Naive thymus-derived CD4-positive, alpha-beta T cell (primary cell): ENCODE measurements at regions of chr7 and their contacts with region 1.

Region 1: DNA sequence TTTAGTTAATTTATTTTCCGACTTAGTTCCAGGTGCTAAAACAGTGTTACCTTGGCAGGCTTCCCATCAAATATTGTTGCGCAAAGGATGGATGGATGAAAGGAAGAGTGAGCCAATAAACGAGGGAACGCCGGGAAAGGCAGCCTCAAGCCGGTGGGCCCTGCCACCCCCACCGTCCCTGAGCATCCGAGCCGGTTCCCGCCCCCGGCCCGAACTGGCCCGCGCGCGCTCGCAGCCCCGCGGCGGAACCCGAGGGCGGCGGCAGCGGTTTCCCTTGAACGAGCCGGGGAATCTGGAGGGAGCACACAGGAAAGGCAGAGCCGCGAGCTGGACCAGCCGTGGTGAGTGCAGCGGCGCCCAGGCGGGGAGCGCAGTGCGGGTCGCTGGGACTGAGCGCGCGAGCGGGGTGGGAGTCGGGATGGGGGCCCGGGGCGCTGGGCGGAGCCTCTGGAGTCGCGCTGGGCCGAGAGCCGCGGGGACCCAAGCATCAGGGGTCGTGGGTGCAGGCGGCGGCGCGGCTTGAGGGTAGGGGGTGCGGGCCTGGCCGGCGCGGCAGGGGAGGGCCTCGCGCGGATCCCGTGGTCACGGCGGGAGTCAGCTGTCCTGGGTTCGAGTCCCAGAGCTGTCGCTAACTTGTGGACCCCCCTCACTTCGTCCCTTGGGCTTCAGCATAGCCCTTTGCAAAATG is at the start of gene AGK:
- DNase-seq: peak; percentile 61 to 83 (median 74)
- ATAC-seq: peak; percentile 96
- H3K4me3 ChIP-seq: peak within 1 kb of the TSS; percentile 89
- H3K4me3 Mint-ChIP-seq: peak within 1 kb of the TSS; percentile 83 to 99 (median 92)
- H3K27ac ChIP-seq: peak within 1 kb of the TSS; percentile 73
- H3K27ac Mint-ChIP-seq: peak within 1 kb of the TSS; percentile 52 to 96 (median 90)
- H3K4me1 ChIP-seq: peaks cover 12 to 17% of the 10 kb centered on the region in 2 donors
- H3K4me1 Mint-ChIP-seq: peaks cover 14 to 44% (median 40%) of the 10 kb centered on the region in 7 donors
- H3K27me3 ChIP-seq: no peaks in the 10 kb centered on the region
- H3K27me3 Mint-ChIP-seq: peaks cover 0 to 4% (median 0%) of the 10 kb centered on the region in 5 donors
- total RNA-seq, gene AGK: 24.3 to 58.8 (median 29.9) TPM

Region 2: GRCh38 chr7:140375892-140376730 is 1175.1 kb before region 1 on chr7:
- CTCF ChIA-PET with region 1: no interaction called
- POLR2A ChIA-PET with region 1: no interaction called
- intact Hi-C with region 1: loop called in 1 of 2 experiments (anchors 10 kb)
- DNase-seq: peak in 8 of 9 donors; percentile 34 to 71 (median 56)
- ATAC-seq: peak; percentile 89
- H3K4me3 ChIP-seq: peak overlapping the region; percentile 58
- H3K4me3 Mint-ChIP-seq: peak overlapping the region; percentile 67 to 92 (median 84)
- H3K27ac ChIP-seq: peak overlapping the region; percentile 75
- H3K27ac Mint-ChIP-seq: peak overlapping the region; percentile 87 to 97 (median 93)
- H3K4me1 ChIP-seq: peaks cover 6 to 10% of the 10 kb centered on the region in 2 donors
- H3K4me1 Mint-ChIP-seq: peaks cover 0 to 48% (median 20%) of the 10 kb centered on the region in 7 donors
- H3K27me3 ChIP-seq: no peaks in the 10 kb centered on the region
- H3K27me3 Mint-ChIP-seq: no peaks in the 10 kb centered on the region

Region 3: GRCh38 chr7:140696680-140697446 is 854.4 kb before region 1 on chr7 and contains the start of gene NDUFB2:
- CTCF ChIA-PET with region 1: no interaction called
- POLR2A ChIA-PET with region 1: no interaction called
- intact Hi-C with region 1: loop called (anchors 5 to 10 kb)
- DNase-seq: peak; percentile 72 to 92 (median 90)
- ATAC-seq: peak; percentile 92
- H3K4me3 ChIP-seq: peak within 1 kb of the TSS; percentile 99
- H3K4me3 Mint-ChIP-seq: peak within 1 kb of the TSS; percentile 87 to 100 (median 98)
- H3K27ac ChIP-seq: peak within 1 kb of the TSS; percentile 88
- H3K27ac Mint-ChIP-seq: peak within 1 kb of the TSS; percentile 92 to 99 (median 98)
- H3K4me1 ChIP-seq: peaks cover 12 to 16% of the 10 kb centered on the region in 2 donors
- H3K4me1 Mint-ChIP-seq: peaks cover 18 to 50% (median 40%) of the 10 kb centered on the region in 7 donors
- H3K27me3 ChIP-seq: no peaks in the 10 kb centered on the region
- H3K27me3 Mint-ChIP-seq: no peaks in the 10 kb centered on the region
- total RNA-seq, gene NDUFB2: 88.3 to 184 (median 94.0) TPM

Region 4: GRCh38 chr7:141231018-141231792 is 320.0 kb before region 1 on chr7:
- CTCF ChIA-PET with region 1: no interaction called
- POLR2A ChIA-PET with region 1: no interaction called
- intact Hi-C with region 1: no loop called
- DNase-seq: no peak
- ATAC-seq: no peak
- H3K4me3 ChIP-seq: no peak overlapping the region
- H3K4me3 Mint-ChIP-seq: no peak overlapping the region
- H3K27ac ChIP-seq: no peak overlapping the region
- H3K27ac Mint-ChIP-seq: no peak overlapping the region
- H3K4me1 ChIP-seq: no peaks in the 10 kb centered on the region
- H3K4me1 Mint-ChIP-seq: no peaks in the 10 kb centered on the region
- H3K27me3 ChIP-seq: no peaks in the 10 kb centered on the region
- H3K27me3 Mint-ChIP-seq: peaks cover 16 to 37% (median 32%) of the 10 kb centered on the region in 5 donors

Region 5: GRCh38 chr7:141533149-141533949 is 17.9 kb before region 1 on chr7:
- CTCF ChIA-PET with region 1: no interaction called
- POLR2A ChIA-PET with region 1: no interaction called
- intact Hi-C with region 1: loop called in 1 of 2 experiments (anchors 1 kb)
- DNase-seq: peak; percentile 10 to 60 (median 46)
- ATAC-seq: peak; percentile 83
- H3K4me3 ChIP-seq: no peak overlapping the region
- H3K4me3 Mint-ChIP-seq: no peak overlapping the region
- H3K27ac ChIP-seq: no peak overlapping the region
- H3K27ac Mint-ChIP-seq: peak overlapping the region in 1 of 9 donors; percentile 70
- H3K4me1 ChIP-seq: no peaks in the 10 kb centered on the region
- H3K4me1 Mint-ChIP-seq: peaks cover 0 to 4% (median 0%) of the 10 kb centered on the region in 7 donors
- H3K27me3 ChIP-seq: peaks cover 0 to 5% of the 10 kb centered on the region in 2 donors
- H3K27me3 Mint-ChIP-seq: peaks cover 32 to 40% (median 34%) of the 10 kb centered on the region in 5 donors

Region 6: DNA sequence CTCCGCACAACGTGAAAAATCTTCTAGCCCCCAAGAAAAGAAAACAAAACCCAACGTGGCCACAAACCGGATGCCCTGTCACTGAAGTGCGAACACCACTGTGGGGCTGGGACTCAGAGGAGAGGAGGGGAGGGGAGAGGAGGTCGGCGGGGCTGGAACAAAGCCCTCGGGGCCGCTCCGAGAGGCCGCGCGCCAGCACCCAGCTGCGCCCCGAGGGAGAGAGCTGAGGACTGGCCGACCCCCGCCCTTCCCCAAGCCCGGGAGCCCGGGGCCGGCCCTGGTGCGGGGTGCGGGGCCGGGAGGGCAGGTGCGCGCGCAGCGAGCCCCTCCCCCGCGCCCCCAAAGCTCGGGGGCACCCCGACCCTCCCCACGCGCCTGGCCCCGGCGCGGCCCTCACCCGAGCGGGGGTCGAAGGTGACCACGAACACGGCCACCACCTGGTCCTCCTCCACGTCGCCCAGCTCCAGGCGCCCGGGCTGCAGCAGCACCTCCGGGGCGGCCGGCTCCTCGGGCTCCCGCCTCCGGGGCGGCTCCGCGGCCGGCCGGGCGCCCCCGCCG is 150.3 kb after region 1 on chr7:
- CTCF ChIA-PET with region 1: no interaction called
- POLR2A ChIA-PET with region 1: interaction called, 3 read pairs
- intact Hi-C with region 1: loop called in 1 of 2 experiments (anchors 2 kb)
- DNase-seq: peak; percentile 50 to 81 (median 76)
- ATAC-seq: peak; percentile 90
- H3K4me3 ChIP-seq: peak overlapping the region; percentile 51
- H3K4me3 Mint-ChIP-seq: peak overlapping the region; percentile 80 to 95 (median 88)
- H3K27ac ChIP-seq: peak overlapping the region; percentile 90
- H3K27ac Mint-ChIP-seq: peak overlapping the region; percentile 77 to 96 (median 88)
- H3K4me1 ChIP-seq: peaks cover 7 to 19% of the 10 kb centered on the region in 2 donors
- H3K4me1 Mint-ChIP-seq: peaks cover 39 to 56% (median 49%) of the 10 kb centered on the region in 7 donors
- H3K27me3 ChIP-seq: no peaks in the 10 kb centered on the region
- H3K27me3 Mint-ChIP-seq: peaks cover 0 to 16% (median 0%) of the 10 kb centered on the region in 5 donors